GM12878 (cell line): ENCODE measurements at regions of chr17 and their contacts with region 1.

Region 1: GRCh38 chr17:42937712-42938596 is 26.3 kb downstream of the AARSD1 start:
- DNase-seq: no peak
- ATAC-seq: peak; percentile 90
- H3K4me3 ChIP-seq: no peak overlapping the region
- H3K27ac ChIP-seq: no peak overlapping the region
- H3K4me1 ChIP-seq: no peaks in the 10 kb centered on the region
- H3K27me3 ChIP-seq: no peaks in the 10 kb centered on the region
- CTCF ChIP-seq: peak; percentile 57 to 79 (median 58)
- EP300 ChIP-seq: no peak
- POLR2A ChIP-seq: no peak
- RAD21 ChIP-seq: peak; percentile 83

Region 2: DNA sequence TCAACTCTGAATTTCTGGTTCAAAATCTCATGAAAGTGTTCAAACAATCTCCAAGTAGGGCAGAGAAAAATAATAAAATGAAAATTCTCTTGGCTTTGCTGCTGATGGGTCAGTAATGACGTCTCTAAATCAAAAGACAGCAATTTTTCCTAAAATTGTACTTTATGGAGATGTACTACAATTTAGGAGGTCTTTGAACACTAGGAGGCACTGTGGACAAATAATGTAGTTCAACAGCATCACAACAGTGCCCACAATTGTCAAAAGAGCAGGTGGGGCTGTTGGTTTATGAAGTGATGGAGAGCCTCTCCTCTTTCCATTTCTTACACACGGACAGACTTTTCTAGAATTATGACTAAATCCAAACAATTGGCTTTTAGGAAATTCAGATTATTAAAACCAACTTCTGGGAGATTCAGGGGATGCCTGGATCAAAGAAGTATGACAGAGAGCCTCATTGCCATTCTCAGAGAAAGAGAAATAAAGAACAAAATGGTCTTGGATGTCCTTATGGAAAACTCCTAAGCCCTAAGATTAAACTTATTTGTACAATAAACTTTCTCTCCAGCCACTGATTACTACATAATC is 216.9 kb before region 1 on chr17:
- CTCF ChIA-PET with region 1: no interaction called
- POLR2A ChIA-PET with region 1: no interaction called
- RAD21 ChIA-PET with region 1: no interaction called
- SMC1A ChIA-PET with region 1: interaction called, 3 read pairs
- in situ Hi-C with region 1: loop called (anchors 10 kb)
- intact Hi-C with region 1: loop called (anchors 2 kb)
- DNase-seq: no peak
- ATAC-seq: peak; percentile 94
- H3K4me3 ChIP-seq: no peak overlapping the region
- H3K27ac ChIP-seq: no peak overlapping the region
- H3K4me1 ChIP-seq: no peaks in the 10 kb centered on the region
- H3K27me3 ChIP-seq: no peaks in the 10 kb centered on the region
- CTCF ChIP-seq: peak; percentile 61 to 83 (median 78); a peak in 5 of 6 replicates
- EP300 ChIP-seq: no peak
- POLR2A ChIP-seq: no peak
- RAD21 ChIP-seq: peak; percentile 73

Region 3: GRCh38 chr17:42843358-42843934 is 94.5 kb before region 1 on chr17:
- CTCF ChIA-PET with region 1: interaction called, 3 read pairs
- POLR2A ChIA-PET with region 1: no interaction called
- RAD21 ChIA-PET with region 1: no interaction called
- SMC1A ChIA-PET with region 1: interaction called, 4 read pairs
- in situ Hi-C with region 1: no loop called
- intact Hi-C with region 1: loop called (anchors 2 kb)
- DNase-seq: no peak
- ATAC-seq: no peak
- H3K4me3 ChIP-seq: no peak overlapping the region
- H3K27ac ChIP-seq: no peak overlapping the region
- H3K4me1 ChIP-seq: no peaks in the 10 kb centered on the region; the same call in 1 of the 2 replicates
- H3K27me3 ChIP-seq: no peaks in the 10 kb centered on the region
- CTCF ChIP-seq: peak; percentile 82 to 87 (median 85)
- EP300 ChIP-seq: no peak
- POLR2A ChIP-seq: no peak; the same call in 1 of the 2 replicates
- RAD21 ChIP-seq: peak; percentile 74

Region 4: DNA sequence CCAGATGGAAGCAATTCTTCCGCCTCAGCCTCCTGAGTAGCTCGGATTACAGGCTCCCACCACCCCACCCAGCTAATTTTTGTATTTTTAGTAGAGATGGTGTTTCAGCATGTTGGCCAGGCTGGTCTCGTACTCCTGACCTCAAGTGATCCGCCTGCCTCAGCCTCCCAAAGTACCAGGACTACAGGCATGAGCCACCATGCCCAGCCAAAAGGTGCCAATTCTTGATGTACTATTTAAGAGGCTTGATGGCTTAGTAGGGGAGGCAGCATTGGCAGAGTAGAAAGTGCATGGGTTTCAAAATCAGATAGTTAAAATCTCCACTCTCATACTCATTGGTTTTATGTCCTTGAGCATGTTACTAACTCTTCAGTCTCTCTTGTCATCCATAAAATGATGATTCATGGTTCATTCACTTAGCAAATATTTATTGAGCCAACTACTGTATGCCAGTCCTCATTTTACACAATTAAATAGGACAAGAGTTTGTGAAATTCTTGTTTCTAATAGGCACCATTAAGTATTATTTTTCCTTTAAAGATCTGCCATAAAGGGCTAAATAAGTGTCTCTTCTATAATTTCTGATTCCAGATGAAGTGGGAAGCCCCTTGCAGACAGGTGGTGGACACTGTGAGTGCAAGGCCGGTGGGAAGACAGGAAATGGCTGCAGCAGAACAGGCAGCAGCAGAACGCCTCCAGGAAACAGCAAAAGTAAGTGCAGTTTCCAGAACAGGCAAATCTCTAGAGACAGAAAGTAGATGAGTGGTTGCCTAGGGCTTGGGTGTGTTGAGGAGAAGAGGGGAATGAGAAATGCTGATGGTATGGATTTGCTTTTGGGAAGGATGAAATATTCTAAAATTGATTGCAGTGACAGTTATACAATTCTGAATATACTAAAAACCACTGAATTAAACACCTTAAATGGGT is 52.0 kb after region 1 on chr17:
- CTCF ChIA-PET with region 1: no interaction called
- POLR2A ChIA-PET with region 1: no interaction called
- RAD21 ChIA-PET with region 1: no interaction called
- SMC1A ChIA-PET with region 1: no interaction called
- in situ Hi-C with region 1: no loop called
- intact Hi-C with region 1: no loop called
- DNase-seq: no peak
- ATAC-seq: no peak
- H3K4me3 ChIP-seq: no peak overlapping the region
- H3K27ac ChIP-seq: no peak overlapping the region
- H3K4me1 ChIP-seq: peaks cover 18% of the 10 kb centered on the region
- H3K27me3 ChIP-seq: no peaks in the 10 kb centered on the region
- CTCF ChIP-seq: no peak
- EP300 ChIP-seq: no peak
- POLR2A ChIP-seq: no peak
- RAD21 ChIP-seq: no peak